HEK293T (cell line): ENCODE measurements at regions of chr11 and their contacts with region 1.

Region 1: DNA sequence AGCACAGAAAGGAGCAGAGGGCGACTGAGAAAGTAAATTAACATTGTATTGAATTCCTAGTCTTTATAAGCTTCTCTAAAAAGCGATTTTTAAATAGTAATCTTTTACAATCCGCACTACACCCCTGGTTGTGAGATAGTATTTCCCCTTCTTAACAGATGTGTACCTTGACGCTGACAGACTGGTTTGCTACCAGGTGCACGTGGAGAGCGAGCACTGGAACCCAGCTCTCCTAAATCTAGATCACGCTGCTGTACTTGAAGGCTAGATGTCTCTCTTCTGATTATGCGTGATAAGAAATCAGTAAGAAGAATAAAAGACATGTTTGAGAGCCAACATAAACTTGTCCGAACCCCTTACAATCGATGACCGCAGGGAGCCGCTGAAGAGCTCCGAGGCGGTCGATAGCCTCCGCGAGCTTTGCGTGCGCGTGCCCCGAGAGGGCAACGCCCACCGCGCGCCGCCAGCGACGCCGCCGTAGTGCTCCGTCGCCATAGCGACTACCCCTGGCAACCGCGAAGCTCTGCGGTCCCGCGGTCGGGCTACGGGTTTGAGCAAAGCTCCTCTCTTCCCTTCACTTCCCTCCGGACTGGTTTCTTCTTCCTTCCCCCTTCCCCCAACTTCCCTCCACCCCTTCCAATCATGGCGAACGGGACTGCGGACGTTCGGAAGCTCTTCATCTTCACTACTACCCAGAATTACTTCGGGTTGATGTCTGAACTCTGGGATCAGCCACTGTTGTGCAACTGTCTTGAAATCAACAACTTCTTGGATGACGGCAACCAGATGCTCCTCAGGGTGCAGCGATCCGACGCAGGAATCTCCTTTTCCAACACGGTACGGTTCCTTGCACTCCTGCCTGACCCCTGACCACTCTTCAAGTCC is at the start of gene DYNC2H1:
- DNase-seq: peak; percentile 94

Region 2: DNA sequence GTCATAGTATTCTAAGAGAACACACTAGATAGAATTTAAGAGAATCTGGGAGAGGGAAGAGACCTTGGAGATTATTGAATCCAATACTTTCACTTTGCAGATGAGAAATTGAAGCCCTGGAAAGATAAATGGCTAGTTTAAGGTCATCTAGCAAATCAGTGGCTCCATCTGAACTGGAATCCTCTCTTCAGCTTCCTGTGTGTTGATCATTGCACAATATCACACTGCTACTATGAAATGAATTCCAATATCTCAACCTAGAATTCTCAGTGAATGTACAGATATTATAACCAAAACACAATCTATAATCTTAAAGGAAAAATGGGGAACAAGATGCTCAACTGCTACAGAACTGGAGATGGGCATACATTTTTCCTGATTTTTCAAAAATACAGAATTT is 61.3 kb before region 1 on chr11:
- CTCF ChIA-PET with region 1: no interaction called
- POLR2A ChIA-PET with region 1: no interaction called
- DNase-seq: no peak

Region 3: GRCh38 chr11:103091801-103092524 is 17.2 kb before region 1 on chr11 and contains the start of gene DCUN1D5:
- CTCF ChIA-PET with region 1: interaction called, 22 read pairs
- POLR2A ChIA-PET with region 1: interaction called, 115 read pairs
- DNase-seq: peak; percentile 97

Region 4: DNA sequence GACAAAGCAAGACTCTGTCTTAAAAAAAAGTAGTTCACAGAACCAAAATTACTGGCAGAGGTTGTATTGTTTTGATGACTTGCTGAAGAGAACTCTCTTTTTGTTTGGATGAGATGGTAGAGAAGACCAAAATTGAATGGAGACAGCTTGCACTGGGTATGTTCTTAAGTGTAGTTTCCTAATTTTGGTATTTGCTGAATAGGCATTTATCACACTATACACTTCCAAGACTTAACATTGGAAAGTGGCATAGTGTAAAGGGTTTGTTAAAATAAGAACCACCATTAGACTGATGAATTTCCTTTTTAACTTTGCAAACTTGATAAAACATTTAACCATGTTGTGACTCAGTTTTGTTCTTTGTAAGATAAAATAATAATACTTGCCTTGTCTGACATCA is 11.9 kb before region 1 on chr11:
- CTCF ChIA-PET with region 1: interaction called, 22 read pairs
- POLR2A ChIA-PET with region 1: interaction called, 115 read pairs
- DNase-seq: no peak